Activated naive CD4-positive, alpha-beta T cell treated with anti-CD3 and anti-CD28 coated beads for 36 hours (primary cell): ENCODE measurements at regions of chr18 and their contacts with region 1.

Region 1: DNA sequence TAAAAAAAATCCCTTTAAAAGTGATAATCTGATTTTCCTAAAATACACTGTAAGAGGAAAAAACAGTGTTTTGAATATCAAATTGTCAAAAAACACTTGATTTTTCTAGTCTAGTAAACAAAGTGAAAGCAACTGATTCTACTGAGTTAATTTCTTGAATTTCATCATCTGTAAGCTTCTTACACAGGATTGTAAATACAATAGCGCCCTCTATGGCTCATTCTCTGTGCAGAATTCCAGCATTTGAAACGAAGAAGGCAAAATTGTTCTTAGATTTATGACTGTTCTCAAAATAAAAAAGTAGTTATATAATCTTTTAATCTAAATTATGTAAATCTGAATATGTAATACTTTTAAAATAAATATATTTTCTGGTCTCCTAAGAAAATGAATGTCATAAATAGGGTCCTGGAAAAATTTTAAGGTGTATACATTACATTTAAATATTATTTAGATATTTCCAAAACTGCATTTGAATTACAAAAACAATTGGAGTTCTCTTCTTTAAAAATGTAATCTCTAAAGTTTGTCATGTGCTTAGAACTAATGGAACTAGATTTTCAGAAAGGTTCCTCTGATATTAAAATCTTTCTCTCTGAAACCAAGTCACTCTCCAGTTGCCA is 176.9 kb upstream of the MC4R start:
- DNase-seq: peak; percentile 20
- H3K4me3 Mint-ChIP-seq: no peak overlapping the region
- H3K27ac Mint-ChIP-seq: no peak overlapping the region
- H3K4me1 Mint-ChIP-seq: no peaks in the 10 kb centered on the region
- H3K27me3 Mint-ChIP-seq: no peaks in the 10 kb centered on the region

Region 2: DNA sequence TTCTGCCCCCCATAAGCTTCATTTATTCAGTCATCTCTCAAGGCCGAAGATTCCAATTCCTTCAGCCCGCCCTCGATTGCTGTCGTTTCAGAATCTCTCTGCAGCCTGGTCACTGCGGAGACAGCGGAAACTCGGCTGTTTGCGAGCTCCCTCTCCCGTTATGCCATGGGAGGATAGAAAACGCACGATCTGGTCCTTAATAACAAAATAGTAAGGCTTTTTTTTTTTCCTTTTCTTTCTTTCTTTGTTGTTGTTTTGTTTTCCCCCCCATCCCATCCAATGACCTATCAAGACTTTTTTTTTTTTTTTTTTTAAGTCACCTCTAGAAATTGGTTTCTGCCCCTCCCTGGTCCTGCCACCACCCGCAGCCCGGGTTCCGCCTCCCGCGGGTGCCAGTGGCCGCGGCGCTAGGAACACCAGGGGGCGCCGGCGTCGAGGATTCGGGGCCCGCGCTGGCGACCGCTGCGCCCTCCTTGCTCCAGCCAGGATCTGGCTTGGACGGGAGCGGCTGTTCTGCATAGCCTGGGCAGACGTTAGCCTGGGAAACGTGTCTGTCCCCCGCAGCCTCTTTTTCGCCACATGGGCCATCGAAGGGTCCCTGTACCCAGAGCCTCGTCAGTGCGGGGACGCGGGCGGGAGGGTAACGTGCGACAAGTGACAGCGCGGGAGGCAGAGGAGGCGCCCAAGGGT is 1241.1 kb before region 1 on chr18:
- CTCF ChIA-PET with region 1: no interaction called
- intact Hi-C with region 1: loop called (anchors 5 kb)
- DNase-seq: peak; percentile 67
- H3K4me3 Mint-ChIP-seq: peak overlapping the region; percentile 48
- H3K27ac Mint-ChIP-seq: no peak overlapping the region
- H3K4me1 Mint-ChIP-seq: no peaks in the 10 kb centered on the region
- H3K27me3 Mint-ChIP-seq: peaks cover 29% of the 10 kb centered on the region

Region 3: DNA sequence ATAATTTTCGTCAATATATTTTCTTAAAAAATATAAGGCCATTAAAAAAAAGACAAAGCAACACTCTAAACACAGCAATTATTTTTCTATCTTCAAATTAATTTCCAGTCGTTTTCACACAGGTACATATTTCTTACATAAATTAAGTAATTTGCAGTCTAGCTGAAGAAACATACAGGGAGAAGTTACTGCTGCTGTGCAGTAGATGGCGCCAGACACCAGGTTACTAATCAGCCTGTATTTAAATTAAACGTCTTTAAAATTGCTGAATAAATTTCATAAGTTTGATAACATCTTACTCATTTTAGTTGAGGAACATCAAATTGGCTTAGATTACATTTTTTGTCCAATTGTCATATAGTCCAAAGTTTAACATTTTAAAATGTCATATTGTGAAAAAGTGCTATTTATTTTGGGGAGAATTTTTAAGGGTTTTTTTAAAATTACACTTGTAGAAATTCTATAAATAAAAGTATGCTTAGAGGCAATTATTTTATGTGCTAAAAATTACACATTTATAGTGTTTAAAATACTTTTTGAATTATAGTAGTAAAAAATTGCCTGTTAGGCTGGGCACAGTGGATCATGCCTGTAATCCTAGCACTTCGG is 561.2 kb before region 1 on chr18:
- CTCF ChIA-PET with region 1: interaction called, 4 read pairs
- intact Hi-C with region 1: loop called (anchors 1 kb)
- DNase-seq: peak; percentile 74
- H3K4me3 Mint-ChIP-seq: no peak overlapping the region
- H3K27ac Mint-ChIP-seq: no peak overlapping the region
- H3K4me1 Mint-ChIP-seq: no peaks in the 10 kb centered on the region
- H3K27me3 Mint-ChIP-seq: peaks cover 18% of the 10 kb centered on the region

Region 4: GRCh38 chr18:60082790-60083189 is 466.7 kb before region 1 on chr18:
- CTCF ChIA-PET with region 1: no interaction called
- intact Hi-C with region 1: loop called (anchors 10 kb)
- DNase-seq: no peak
- H3K4me3 Mint-ChIP-seq: no peak overlapping the region
- H3K27ac Mint-ChIP-seq: no peak overlapping the region
- H3K4me1 Mint-ChIP-seq: no peaks in the 10 kb centered on the region
- H3K27me3 Mint-ChIP-seq: no peaks in the 10 kb centered on the region

Region 5: GRCh38 chr18:60534538-60534937 is 14.9 kb before region 1 on chr18:
- CTCF ChIA-PET with region 1: no interaction called
- intact Hi-C with region 1: no loop called
- DNase-seq: no peak
- H3K4me3 Mint-ChIP-seq: no peak overlapping the region
- H3K27ac Mint-ChIP-seq: no peak overlapping the region
- H3K4me1 Mint-ChIP-seq: no peaks in the 10 kb centered on the region
- H3K27me3 Mint-ChIP-seq: no peaks in the 10 kb centered on the region

Region 6: DNA sequence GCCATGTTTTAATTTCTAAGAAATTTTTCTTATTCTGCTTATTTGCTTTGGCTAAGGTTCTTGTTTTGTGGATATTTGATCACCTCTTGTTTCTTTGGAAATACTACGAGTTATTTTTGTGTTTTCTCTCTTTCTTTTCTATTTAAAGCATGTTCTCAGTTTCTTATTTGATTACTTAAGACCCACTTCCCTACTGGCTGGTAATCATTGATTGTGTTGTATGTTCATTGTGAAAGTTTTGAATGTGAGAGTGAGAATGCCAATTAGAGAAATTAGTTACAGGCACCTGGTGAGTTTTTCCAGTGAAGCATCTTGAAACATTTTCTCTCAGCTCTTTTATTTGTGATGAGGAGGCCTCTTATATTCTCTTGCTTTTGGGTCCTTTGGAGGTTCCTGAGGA is 49.8 kb after region 1 on chr18:
- CTCF ChIA-PET with region 1: no interaction called
- intact Hi-C with region 1: no loop called
- DNase-seq: no peak
- H3K4me3 Mint-ChIP-seq: no peak overlapping the region
- H3K27ac Mint-ChIP-seq: no peak overlapping the region
- H3K4me1 Mint-ChIP-seq: no peaks in the 10 kb centered on the region
- H3K27me3 Mint-ChIP-seq: no peaks in the 10 kb centered on the region